ENCODE measurements at regions of chr17 and their contacts with region 1.

Region 1: DNA sequence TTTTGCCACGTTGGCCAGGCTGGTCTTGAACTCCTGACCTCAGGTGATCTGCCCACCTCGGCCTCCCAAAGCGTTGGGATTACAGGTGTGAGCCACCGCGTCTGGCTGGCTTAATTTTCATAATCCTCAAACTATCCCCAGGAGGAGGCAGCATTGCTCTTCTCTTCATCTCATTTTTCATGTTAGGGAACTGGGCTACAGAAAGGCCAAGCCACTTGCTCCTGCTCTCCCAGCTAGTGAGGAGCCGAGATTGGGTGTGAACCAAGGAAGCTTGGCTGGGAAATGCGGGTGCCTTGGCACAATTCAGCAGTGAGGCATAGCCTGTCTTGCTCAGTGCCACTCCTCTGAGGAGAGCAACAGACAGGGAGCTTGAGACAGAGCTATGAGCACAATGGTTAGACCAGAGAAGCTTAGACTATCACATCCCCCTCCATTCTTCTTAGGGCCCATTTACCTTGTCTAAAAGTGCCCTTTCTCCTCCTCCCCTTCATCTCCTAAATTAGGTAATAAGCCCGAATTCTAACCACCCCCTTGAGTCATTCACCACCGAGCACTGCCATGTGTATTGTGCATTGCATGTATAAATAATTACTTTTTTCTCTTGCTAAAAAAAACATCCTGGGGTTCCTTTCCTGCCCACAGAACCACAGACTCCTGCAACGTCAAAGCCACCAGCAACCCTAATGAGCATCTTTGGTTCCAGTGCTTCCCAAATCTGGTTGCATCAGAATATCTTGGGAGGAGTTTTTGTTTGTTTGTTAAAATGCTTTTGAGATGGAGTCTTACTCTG is 20.0 kb upstream of the KIF19 start:
- DNase-seq: no peak
- H3K4me3 ChIP-seq: no peak overlapping the region
- H3K4me3 Mint-ChIP-seq: no peak overlapping the region
- H3K27ac ChIP-seq: no peak overlapping the region
- H3K27ac Mint-ChIP-seq: peak overlapping the region in 1 of 7 donors; percentile 46
- H3K4me1 ChIP-seq: peaks cover 4 to 11% of the 10 kb centered on the region in 2 donors
- H3K4me1 Mint-ChIP-seq: peaks cover 16% of the 10 kb centered on the region
- H3K27me3 ChIP-seq: peaks cover 0 to 5% of the 10 kb centered on the region in 2 donors
- H3K27me3 Mint-ChIP-seq: peaks cover 16 to 30% (median 20%) of the 10 kb centered on the region in 3 donors
- CTCF ChIP-seq: no peak

Region 2: GRCh38 chr17:74152591-74153455 is 153.2 kb before region 1 on chr17:
- intact Hi-C with region 1: no loop called
- DNase-seq: no peak
- H3K4me3 ChIP-seq: no peak overlapping the region
- H3K4me3 Mint-ChIP-seq: no peak overlapping the region
- H3K27ac ChIP-seq: no peak overlapping the region
- H3K27ac Mint-ChIP-seq: no peak overlapping the region
- H3K4me1 ChIP-seq: no peaks in the 10 kb centered on the region
- H3K4me1 Mint-ChIP-seq: no peaks in the 10 kb centered on the region
- H3K27me3 ChIP-seq: no peaks in the 10 kb centered on the region
- H3K27me3 Mint-ChIP-seq: peaks cover 14 to 22% (median 17%) of the 10 kb centered on the region in 3 donors
- CTCF ChIP-seq: no peak

Region 3: GRCh38 chr17:74354123-74354522 is 48.1 kb after region 1 on chr17:
- intact Hi-C with region 1: loop called in 1 of 2 experiments (anchors 10 kb)
- DNase-seq: peak; percentile 48 to 62 (median 49)
- H3K4me3 ChIP-seq: no peak overlapping the region
- H3K4me3 Mint-ChIP-seq: peak overlapping the region in 1 of 2 donors; percentile 69
- H3K27ac ChIP-seq: no peak overlapping the region
- H3K27ac Mint-ChIP-seq: no peak overlapping the region
- H3K4me1 ChIP-seq: peaks cover 0 to 18% of the 10 kb centered on the region in 2 donors
- H3K4me1 Mint-ChIP-seq: peaks cover 11% of the 10 kb centered on the region
- H3K27me3 ChIP-seq: peaks cover 37 to 79% of the 10 kb centered on the region in 2 donors
- H3K27me3 Mint-ChIP-seq: peaks cover 74 to 92% (median 83%) of the 10 kb centered on the region in 3 donors
- CTCF ChIP-seq: peak; percentile 82